GM12878 (cell line): ENCODE measurements at regions of chr2 and their contacts with region 1.

Region 1: GRCh38 chr2:152025678-152026287 is 73.1 kb downstream of the CACNB4 start:
- DNase-seq: peak; percentile 63
- ATAC-seq: peak; percentile 98
- H3K4me3 ChIP-seq: no peak overlapping the region
- H3K27ac ChIP-seq: no peak overlapping the region
- H3K4me1 ChIP-seq: peaks cover 10% of the 10 kb centered on the region
- H3K27me3 ChIP-seq: no peaks in the 10 kb centered on the region
- CTCF ChIP-seq: peak; percentile 71 to 98 (median 92)
- EP300 ChIP-seq: no peak
- POLR2A ChIP-seq: no peak
- RAD21 ChIP-seq: peak; percentile 71

Region 2: GRCh38 chr2:151409601-151410484 is 615.9 kb before region 1 on chr2 and contains the start of gene RIF1:
- CTCF ChIA-PET with region 1: no interaction called
- POLR2A ChIA-PET with region 1: interaction called, 10 read pairs
- RAD21 ChIA-PET with region 1: no interaction called
- SMC1A ChIA-PET with region 1: no interaction called
- in situ Hi-C with region 1: no loop called
- intact Hi-C with region 1: no loop called
- DNase-seq: peak; percentile 45
- ATAC-seq: peak; percentile 95
- H3K4me3 ChIP-seq: peak within 1 kb of the TSS; percentile 97
- H3K27ac ChIP-seq: peak within 1 kb of the TSS; percentile 91
- H3K4me1 ChIP-seq: no peaks in the 10 kb centered on the region
- H3K27me3 ChIP-seq: no peaks in the 10 kb centered on the region; a peak in 1 of 4 replicates
- CTCF ChIP-seq: peak; percentile 39 to 74 (median 41)
- EP300 ChIP-seq: no peak
- POLR2A ChIP-seq: peak; percentile 83
- RAD21 ChIP-seq: no peak
- polyA plus RNA-seq, gene RIF1: 6.3 to 9.7 TPM

Region 3: DNA sequence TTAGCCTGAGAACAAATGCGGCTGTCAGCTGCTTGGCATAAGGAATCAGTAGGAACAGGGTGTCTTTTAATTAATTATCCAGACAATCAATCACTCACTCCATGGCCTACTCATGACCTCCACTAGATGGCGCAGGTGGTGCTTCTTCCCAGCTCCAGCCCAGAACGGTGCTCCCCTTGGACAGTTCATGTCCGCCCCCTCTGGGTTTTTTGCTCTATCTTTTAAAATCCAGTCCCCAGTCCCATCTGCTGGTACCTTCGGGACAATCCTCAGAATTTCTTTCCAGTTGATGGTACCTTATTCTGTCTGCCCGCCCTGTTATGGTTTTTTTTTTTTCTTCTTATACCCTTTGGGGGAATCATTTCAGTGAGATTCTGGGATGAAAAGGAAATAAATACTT is 26.7 kb before region 1 on chr2:
- CTCF ChIA-PET with region 1: interaction called, 77 read pairs
- POLR2A ChIA-PET with region 1: no interaction called
- RAD21 ChIA-PET with region 1: interaction called, 5 read pairs
- SMC1A ChIA-PET with region 1: interaction called, 15 read pairs
- in situ Hi-C with region 1: no loop called
- intact Hi-C with region 1: loop called (anchors 1 kb)
- DNase-seq: no peak
- ATAC-seq: peak; percentile 96
- H3K4me3 ChIP-seq: no peak overlapping the region
- H3K27ac ChIP-seq: no peak overlapping the region
- H3K4me1 ChIP-seq: peaks cover 3% of the 10 kb centered on the region
- H3K27me3 ChIP-seq: no peaks in the 10 kb centered on the region; a peak in 1 of 4 replicates
- CTCF ChIP-seq: peak; percentile 72 to 90 (median 85)
- EP300 ChIP-seq: no peak
- POLR2A ChIP-seq: no peak
- RAD21 ChIP-seq: peak; percentile 58

Region 4: GRCh38 chr2:152036611-152037469 is 11.1 kb after region 1 on chr2:
- CTCF ChIA-PET with region 1: interaction called, 37 read pairs
- POLR2A ChIA-PET with region 1: no interaction called
- RAD21 ChIA-PET with region 1: interaction called, 7 read pairs
- SMC1A ChIA-PET with region 1: interaction called, 3 read pairs
- in situ Hi-C with region 1: no loop called
- intact Hi-C with region 1: no loop called
- DNase-seq: no peak
- ATAC-seq: peak; percentile 97
- H3K4me3 ChIP-seq: no peak overlapping the region
- H3K27ac ChIP-seq: no peak overlapping the region
- H3K4me1 ChIP-seq: no peaks in the 10 kb centered on the region
- H3K27me3 ChIP-seq: no peaks in the 10 kb centered on the region
- CTCF ChIP-seq: peak; percentile 78 to 89 (median 80)
- EP300 ChIP-seq: no peak
- POLR2A ChIP-seq: no peak
- RAD21 ChIP-seq: peak; percentile 99

Region 5: GRCh38 chr2:152047819-152048471 is 22.2 kb after region 1 on chr2:
- CTCF ChIA-PET with region 1: interaction called, 56 read pairs
- POLR2A ChIA-PET with region 1: no interaction called
- RAD21 ChIA-PET with region 1: no interaction called
- SMC1A ChIA-PET with region 1: interaction called, 5 read pairs
- in situ Hi-C with region 1: no loop called
- intact Hi-C with region 1: no loop called
- DNase-seq: no peak
- ATAC-seq: peak; percentile 55
- H3K4me3 ChIP-seq: no peak overlapping the region
- H3K27ac ChIP-seq: peak overlapping the region; percentile 96
- H3K4me1 ChIP-seq: peaks cover 64% of the 10 kb centered on the region
- H3K27me3 ChIP-seq: no peaks in the 10 kb centered on the region
- CTCF ChIP-seq: peak; percentile 15 to 57 (median 46); a peak in 3 of 6 replicates
- EP300 ChIP-seq: no peak
- POLR2A ChIP-seq: no peak
- RAD21 ChIP-seq: peak; percentile 31

Region 6: GRCh38 chr2:152106464-152106863 is 80.7 kb after region 1 on chr2:
- CTCF ChIA-PET with region 1: no interaction called
- POLR2A ChIA-PET with region 1: no interaction called
- RAD21 ChIA-PET with region 1: no interaction called
- SMC1A ChIA-PET with region 1: no interaction called
- in situ Hi-C with region 1: no loop called
- intact Hi-C with region 1: no loop called
- DNase-seq: no peak
- ATAC-seq: no peak
- H3K4me3 ChIP-seq: no peak overlapping the region
- H3K27ac ChIP-seq: no peak overlapping the region
- H3K4me1 ChIP-seq: no peaks in the 10 kb centered on the region
- H3K27me3 ChIP-seq: no peaks in the 10 kb centered on the region
- CTCF ChIP-seq: no peak
- EP300 ChIP-seq: no peak
- POLR2A ChIP-seq: no peak
- RAD21 ChIP-seq: no peak

Region 7: GRCh38 chr2:152319831-152320570 is 294.2 kb after region 1 on chr2:
- CTCF ChIA-PET with region 1: no interaction called
- POLR2A ChIA-PET with region 1: no interaction called
- RAD21 ChIA-PET with region 1: no interaction called
- SMC1A ChIA-PET with region 1: no interaction called
- in situ Hi-C with region 1: no loop called
- intact Hi-C with region 1: no loop called
- DNase-seq: no peak
- ATAC-seq: no peak
- H3K4me3 ChIP-seq: no peak overlapping the region
- H3K27ac ChIP-seq: no peak overlapping the region
- H3K4me1 ChIP-seq: no peaks in the 10 kb centered on the region
- H3K27me3 ChIP-seq: no peaks in the 10 kb centered on the region
- CTCF ChIP-seq: no peak
- EP300 ChIP-seq: no peak
- POLR2A ChIP-seq: no peak
- RAD21 ChIP-seq: no peak